Heart left ventricle (tissue), 16 donors: ENCODE measurements at regions of chr9 and their contacts with region 1.

Region 1: GRCh38 chr9:136949817-136950655 is 2.0 kb upstream of the LCN12 start:
- DNase-seq: peak; percentile 95 to 98 (median 97)
- ATAC-seq: peak; percentile 85 to 90 (median 88)
- H3K4me3 ChIP-seq: peak overlapping the region; percentile 35 to 75 (median 71)
- H3K27ac ChIP-seq: peak overlapping the region; percentile 71 to 98 (median 90)
- H3K4me1 ChIP-seq: peaks cover 0 to 56% (median 27%) of the 10 kb centered on the region in 12 donors
- H3K27me3 ChIP-seq: no peaks in the 10 kb centered on the region
- CTCF ChIP-seq: peak in 9 of 12 donors; percentile 11 to 35 (median 27)
- POLR2A ChIP-seq: peak; percentile 59 to 93

Region 2: DNA sequence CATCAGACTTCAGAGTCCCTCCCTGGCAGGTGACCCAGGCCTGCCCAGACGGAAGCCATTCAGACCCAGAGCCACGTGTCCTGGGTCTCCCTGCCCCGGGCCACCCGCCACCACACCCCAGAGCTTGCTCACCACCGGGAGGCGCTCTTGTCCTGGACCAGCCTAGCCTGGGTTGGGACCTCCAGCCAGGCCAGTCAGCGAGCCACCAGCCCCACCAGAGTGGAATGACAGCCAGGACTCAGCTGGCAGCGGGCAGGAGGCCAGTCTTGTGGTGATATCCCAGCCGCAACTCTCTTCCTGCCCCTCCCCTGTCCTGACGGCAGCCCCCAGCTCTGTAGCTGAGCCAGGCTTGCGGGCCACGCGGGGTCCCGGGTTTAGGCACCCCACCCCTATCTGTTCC is 25.6 kb after region 1 on chr9:
- intact Hi-C with region 1: loop called in 5 of 10 experiments (anchors 1 to 5 kb)
- DNase-seq: peak; percentile 74 to 86 (median 78)
- ATAC-seq: peak in 3 of 4 donors; percentile 1 to 26 (median 4)
- H3K4me3 ChIP-seq: peak overlapping the region in 3 of 12 donors; percentile 1 to 6 (median 6)
- H3K27ac ChIP-seq: peak overlapping the region in 11 of 12 donors; percentile 47 to 98 (median 89)
- H3K4me1 ChIP-seq: peaks cover 10 to 72% (median 48%) of the 10 kb centered on the region in 12 donors
- H3K27me3 ChIP-seq: peaks cover 0 to 9% (median 0%) of the 10 kb centered on the region in 9 donors
- CTCF ChIP-seq: peak; percentile 12 to 60 (median 38)
- POLR2A ChIP-seq: no peak

Region 3: DNA sequence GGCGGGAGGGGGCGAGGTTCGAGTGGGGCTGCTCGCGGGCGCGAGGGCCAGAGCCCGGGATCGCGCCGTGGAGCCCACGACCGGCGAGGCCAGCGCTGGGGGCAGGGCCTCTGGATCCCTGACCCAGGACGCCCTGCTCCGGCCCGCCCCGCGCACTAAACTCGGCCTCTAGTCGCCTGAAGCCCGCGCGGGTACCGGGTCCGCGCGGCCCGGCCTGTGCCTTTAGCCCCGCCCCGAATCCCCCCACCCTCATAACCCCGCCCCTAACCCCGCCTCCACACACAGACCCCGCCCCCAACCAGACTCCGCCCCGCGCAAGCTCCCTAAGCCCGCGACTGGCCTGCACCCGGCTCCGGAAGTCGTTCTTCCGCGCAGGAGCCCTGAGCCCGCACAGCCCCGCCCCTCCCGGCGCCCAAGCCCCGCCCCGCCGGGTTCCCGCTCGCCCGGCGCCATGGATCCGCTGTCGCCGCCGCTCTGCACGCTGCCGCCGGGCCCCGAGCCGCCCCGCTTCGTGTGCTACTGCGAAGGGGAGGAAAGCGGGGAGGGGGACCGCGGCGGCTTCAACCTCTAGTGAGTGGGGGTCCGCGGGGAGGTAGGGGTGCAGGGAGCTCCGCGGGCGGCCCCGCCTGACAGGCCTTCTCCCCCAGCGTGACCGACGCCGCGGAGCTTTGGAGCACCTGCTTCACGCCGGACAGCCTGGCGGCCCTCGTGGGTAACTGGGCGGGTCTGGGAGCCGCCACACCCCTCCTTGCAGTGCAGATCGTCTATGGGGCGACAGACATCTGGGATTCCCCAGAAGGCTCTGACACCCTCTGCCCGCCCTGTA is 42.2 kb after region 1 on chr9 and contains the start of gene PAXX:
- intact Hi-C with region 1: loop called in 5 of 10 experiments (anchors 5 kb)
- DNase-seq: peak; percentile 94 to 97 (median 95)
- ATAC-seq: peak; percentile 89 to 94 (median 94)
- H3K4me3 ChIP-seq: peak within 1 kb of the TSS; percentile 60 to 98 (median 82)
- H3K27ac ChIP-seq: peak within 1 kb of the TSS; percentile 8 to 91 (median 87)
- H3K4me1 ChIP-seq: peaks cover 3 to 55% (median 31%) of the 10 kb centered on the region in 12 donors
- H3K27me3 ChIP-seq: peaks cover 0 to 28% (median 0%) of the 10 kb centered on the region in 9 donors
- CTCF ChIP-seq: no peak
- POLR2A ChIP-seq: peak in 1 of 2 donors; percentile 47
- total RNA-seq, gene PAXX: 15.0 to 35.3 (median 19.4) TPM

Region 4: GRCh38 chr9:137029058-137029936 is 79.3 kb after region 1 on chr9:
- intact Hi-C with region 1: loop called in 7 of 10 experiments (anchors 2 to 5 kb)
- DNase-seq: peak; percentile 73 to 91 (median 82)
- ATAC-seq: peak; percentile 28 to 76 (median 70)
- H3K4me3 ChIP-seq: peak overlapping the region in 11 of 12 donors; percentile 45 to 79 (median 67)
- H3K27ac ChIP-seq: peak overlapping the region in 1 of 12 donors; percentile 87
- H3K4me1 ChIP-seq: peaks cover 5 to 68% (median 25%) of the 10 kb centered on the region in 12 donors
- H3K27me3 ChIP-seq: no peaks in the 10 kb centered on the region
- CTCF ChIP-seq: peak; percentile 74 to 96 (median 90)
- POLR2A ChIP-seq: no peak

Region 5: DNA sequence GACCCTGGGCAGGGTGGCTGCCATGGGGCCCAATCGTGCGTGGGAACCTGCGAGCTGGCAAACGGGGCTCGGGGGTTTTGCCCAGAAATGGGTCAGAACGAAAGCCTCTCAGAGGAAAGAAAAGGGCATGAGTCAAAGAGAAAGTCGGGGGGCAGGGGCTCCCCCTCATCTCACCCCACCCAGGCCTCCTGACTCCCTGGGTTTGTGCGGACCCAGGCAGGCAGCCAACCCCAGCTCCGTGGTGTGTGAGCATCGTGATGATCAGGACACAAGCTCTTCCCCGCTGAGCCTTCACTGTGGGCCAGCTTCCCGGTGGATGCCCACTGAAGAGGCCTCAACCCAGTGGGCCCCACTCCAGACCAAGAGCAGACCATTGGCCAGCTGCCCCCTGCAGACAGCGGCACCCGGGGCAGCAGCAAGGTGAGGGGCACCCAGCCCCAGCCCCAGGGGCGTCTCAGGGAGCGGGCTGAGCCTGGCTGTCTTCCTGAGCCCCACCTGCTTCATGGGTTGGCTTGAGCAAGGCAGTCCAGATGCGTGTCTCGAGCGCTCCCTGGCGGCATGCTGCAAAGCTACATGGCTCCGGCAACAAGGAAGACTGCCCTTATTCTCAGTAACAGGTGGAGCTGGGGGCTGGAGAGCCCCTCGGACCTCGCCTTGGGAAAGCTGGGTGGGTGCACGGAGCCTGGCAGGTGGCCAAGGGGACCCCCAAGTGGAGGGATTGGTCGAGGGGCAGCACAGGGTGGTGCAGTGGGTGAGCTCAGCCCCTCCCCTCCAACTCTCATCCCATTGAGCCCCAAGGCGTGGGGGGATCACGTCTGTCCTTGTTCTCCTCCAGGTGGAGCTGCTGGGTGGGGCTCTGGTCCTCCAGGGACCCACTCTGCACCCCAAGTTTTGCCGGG is 85.1 kb after region 1 on chr9:
- intact Hi-C with region 1: loop called in 9 of 10 experiments (anchors 1 to 5 kb)
- DNase-seq: peak; percentile 79 to 93 (median 80)
- ATAC-seq: peak; percentile 64 to 82 (median 76)
- H3K4me3 ChIP-seq: peak overlapping the region in 2 of 12 donors; percentile 4 to 27
- H3K27ac ChIP-seq: peak overlapping the region in 2 of 12 donors; percentile 38 to 68
- H3K4me1 ChIP-seq: peaks cover 0 to 50% (median 11%) of the 10 kb centered on the region in 12 donors
- H3K27me3 ChIP-seq: no peaks in the 10 kb centered on the region
- CTCF ChIP-seq: peak; percentile 85 to 95 (median 90)
- POLR2A ChIP-seq: peak in 1 of 2 donors; percentile 9